ENCODE measurements at regions of chr14 and their contacts with region 1.

Region 1: GRCh38 chr14:34722717-34723545 is 8.5 kb upstream of the CFL2 start:
- DNase-seq: peak; percentile 74
- H3K4me3 ChIP-seq: no peak overlapping the region
- H3K27ac ChIP-seq: no peak overlapping the region
- H3K4me1 ChIP-seq: no peaks in the 10 kb centered on the region
- H3K27me3 ChIP-seq: no peaks in the 10 kb centered on the region
- CTCF ChIP-seq: peak; percentile 86

Region 2: GRCh38 chr14:34671716-34672115 is 51.2 kb before region 1 on chr14:
- CTCF ChIA-PET with region 1: interaction called, 11 read pairs
- POLR2A ChIA-PET with region 1: no interaction called
- intact Hi-C with region 1: loop called (anchors 2 kb)
- DNase-seq: no peak
- H3K4me3 ChIP-seq: no peak overlapping the region
- H3K27ac ChIP-seq: no peak overlapping the region
- H3K4me1 ChIP-seq: no peaks in the 10 kb centered on the region
- H3K27me3 ChIP-seq: no peaks in the 10 kb centered on the region
- CTCF ChIP-seq: no peak

Region 3: DNA sequence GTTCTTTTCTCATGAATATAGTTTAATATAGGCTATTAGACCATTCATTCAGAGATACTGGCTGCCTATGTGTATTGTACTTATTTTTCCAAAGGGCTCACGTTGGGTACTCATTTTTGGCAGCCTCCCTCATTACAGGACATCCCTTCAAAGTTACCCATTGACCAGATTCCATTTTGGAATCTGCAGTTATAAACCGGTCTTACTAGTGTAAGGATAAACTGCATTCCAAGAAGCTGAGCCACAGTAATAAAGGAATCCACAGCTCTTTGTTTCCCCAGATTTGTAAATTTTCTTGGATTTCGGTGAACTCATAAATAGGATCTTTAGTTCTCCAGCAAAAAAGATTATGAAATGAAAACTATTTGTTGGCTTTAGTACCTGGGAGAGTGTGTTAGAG is 10.3 kb after region 1 on chr14:
- CTCF ChIA-PET with region 1: interaction called, 11 read pairs
- POLR2A ChIA-PET with region 1: no interaction called
- intact Hi-C with region 1: no loop called
- DNase-seq: no peak
- H3K4me3 ChIP-seq: no peak overlapping the region
- H3K27ac ChIP-seq: no peak overlapping the region
- H3K4me1 ChIP-seq: no peaks in the 10 kb centered on the region
- H3K27me3 ChIP-seq: no peaks in the 10 kb centered on the region
- CTCF ChIP-seq: no peak

Region 4: GRCh38 chr14:34966413-34966812 is 243.5 kb after region 1 on chr14:
- CTCF ChIA-PET with region 1: no interaction called
- POLR2A ChIA-PET with region 1: no interaction called
- intact Hi-C with region 1: no loop called
- DNase-seq: no peak
- H3K4me3 ChIP-seq: no peak overlapping the region
- H3K27ac ChIP-seq: no peak overlapping the region
- H3K4me1 ChIP-seq: no peaks in the 10 kb centered on the region
- H3K27me3 ChIP-seq: no peaks in the 10 kb centered on the region
- CTCF ChIP-seq: no peak